OCI-LY7 (cell line): ENCODE measurements at regions of chr3 and their contacts with region 1.

Region 1: GRCh38 chr3:132416807-132417694 is at the start of gene DNAJC13:
- DNase-seq: peak; percentile 95
- H3K4me3 ChIP-seq: peak within 1 kb of the TSS; percentile 97
- H3K27ac ChIP-seq: peak within 1 kb of the TSS; percentile 64
- H3K4me1 ChIP-seq: peaks cover 27% of the 10 kb centered on the region
- CTCF ChIP-seq: no peak
- total RNA-seq, gene DNAJC13: 22.8 and 30.7 TPM in 2 replicates

Region 2: GRCh38 chr3:132154609-132155008 is 262.4 kb before region 1 on chr3:
- CTCF ChIA-PET with region 1: no interaction called
- POLR2A ChIA-PET with region 1: no interaction called
- intact Hi-C with region 1: no loop called
- DNase-seq: no peak
- H3K4me3 ChIP-seq: no peak overlapping the region
- H3K27ac ChIP-seq: no peak overlapping the region
- H3K4me1 ChIP-seq: no peaks in the 10 kb centered on the region
- CTCF ChIP-seq: no peak

Region 3: DNA sequence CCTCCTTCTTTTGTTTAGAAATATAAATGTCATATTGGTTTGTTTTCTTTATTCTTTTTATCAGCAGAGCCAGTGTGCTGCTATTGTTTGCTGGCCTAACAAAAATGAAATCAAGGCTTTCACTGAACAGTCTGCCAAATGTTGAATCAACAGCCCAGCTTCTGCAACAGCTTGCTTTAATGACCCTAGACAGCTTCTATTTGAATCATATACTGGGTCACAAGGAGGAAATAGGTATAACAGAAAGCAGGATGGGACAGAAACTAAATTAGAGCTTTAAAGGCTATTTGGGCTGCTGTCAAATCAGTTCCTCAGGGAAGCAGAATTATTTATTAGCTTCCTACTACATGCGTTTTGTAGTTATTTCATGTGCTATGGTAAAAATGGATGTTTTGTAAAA is 11.9 kb before region 1 on chr3:
- CTCF ChIA-PET with region 1: no interaction called
- POLR2A ChIA-PET with region 1: interaction called, 12 read pairs
- intact Hi-C with region 1: no loop called
- DNase-seq: no peak
- H3K4me3 ChIP-seq: no peak overlapping the region
- H3K27ac ChIP-seq: no peak overlapping the region
- H3K4me1 ChIP-seq: peaks cover 29% of the 10 kb centered on the region
- CTCF ChIP-seq: no peak

Region 4: DNA sequence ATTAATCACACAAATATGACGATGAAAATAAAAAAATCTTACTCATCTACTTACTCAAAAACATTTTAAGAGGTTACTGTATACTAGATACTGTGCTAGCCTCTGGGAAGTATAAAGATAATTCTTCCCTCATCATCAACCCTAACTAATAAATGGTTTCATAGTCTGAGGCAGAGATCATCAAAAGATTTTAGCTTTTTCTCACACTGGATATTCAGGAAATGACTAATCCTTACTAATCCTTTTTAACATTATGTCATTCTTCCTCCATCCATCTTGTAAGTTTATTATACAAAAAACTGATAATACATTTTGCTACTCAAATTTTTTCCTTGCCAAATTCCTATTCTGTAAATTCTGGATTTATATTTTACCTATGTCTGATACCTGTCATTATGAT is 212.9 kb after region 1 on chr3:
- CTCF ChIA-PET with region 1: no interaction called
- POLR2A ChIA-PET with region 1: no interaction called
- intact Hi-C with region 1: loop called (anchors 5 kb)
- DNase-seq: no peak
- H3K4me3 ChIP-seq: no peak overlapping the region
- H3K27ac ChIP-seq: no peak overlapping the region
- H3K4me1 ChIP-seq: peaks cover 18% of the 10 kb centered on the region
- CTCF ChIP-seq: no peak